ENCODE measurements at regions of chr1 and their contacts with region 1.

Region 1: DNA sequence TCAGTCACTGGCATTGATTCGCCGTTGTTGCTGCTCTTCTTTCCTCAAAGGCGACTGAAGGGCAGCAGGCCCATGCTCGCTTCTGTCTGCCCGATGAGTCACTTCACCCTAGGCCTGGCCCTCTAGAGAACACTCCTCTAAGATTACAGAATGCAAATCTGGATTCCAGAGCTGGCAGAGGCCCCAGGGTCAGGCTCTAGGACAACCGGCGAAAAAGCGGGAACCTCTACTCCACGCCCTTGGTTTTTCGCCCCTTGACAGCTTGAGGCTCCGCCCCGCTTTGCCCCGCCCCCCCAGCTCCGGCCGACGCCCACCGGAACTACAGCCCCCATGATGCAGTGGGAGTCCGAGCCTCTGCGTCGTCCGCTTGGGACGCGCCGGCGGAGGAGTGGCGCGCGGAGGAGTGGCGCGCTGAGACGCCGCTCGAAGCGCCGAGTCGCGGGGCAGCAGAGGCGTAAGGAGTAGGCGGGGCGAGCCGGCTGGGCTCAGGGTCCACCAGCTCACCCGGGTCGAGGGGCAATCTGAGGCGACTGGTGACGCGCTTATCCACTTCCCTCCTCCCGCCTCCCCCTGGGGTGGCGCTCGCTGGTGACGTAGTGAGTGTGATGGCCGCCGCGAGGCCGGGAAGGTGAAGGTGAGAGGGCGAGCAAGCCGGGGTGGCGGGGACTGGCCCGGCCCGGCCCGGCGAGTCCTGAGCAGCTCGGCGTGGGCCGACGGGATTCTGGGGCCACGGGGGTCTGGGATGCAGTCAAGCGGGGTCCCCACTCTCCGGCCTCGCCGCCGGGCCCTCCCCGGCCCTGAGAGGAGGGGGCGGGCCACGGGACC is at the start of gene MFN2:
- DNase-seq: peak; percentile 98
- H3K4me3 ChIP-seq: peak within 1 kb of the TSS; percentile 67 to 95 (median 89)
- H3K27ac ChIP-seq: peak within 1 kb of the TSS; percentile 91
- H3K4me1 ChIP-seq: peaks cover 35% of the 10 kb centered on the region
- H3K27me3 ChIP-seq: no peaks in the 10 kb centered on the region
- CTCF ChIP-seq: no peak
- total RNA-seq, gene MFN2: 106 to 133 TPM

Region 2: DNA sequence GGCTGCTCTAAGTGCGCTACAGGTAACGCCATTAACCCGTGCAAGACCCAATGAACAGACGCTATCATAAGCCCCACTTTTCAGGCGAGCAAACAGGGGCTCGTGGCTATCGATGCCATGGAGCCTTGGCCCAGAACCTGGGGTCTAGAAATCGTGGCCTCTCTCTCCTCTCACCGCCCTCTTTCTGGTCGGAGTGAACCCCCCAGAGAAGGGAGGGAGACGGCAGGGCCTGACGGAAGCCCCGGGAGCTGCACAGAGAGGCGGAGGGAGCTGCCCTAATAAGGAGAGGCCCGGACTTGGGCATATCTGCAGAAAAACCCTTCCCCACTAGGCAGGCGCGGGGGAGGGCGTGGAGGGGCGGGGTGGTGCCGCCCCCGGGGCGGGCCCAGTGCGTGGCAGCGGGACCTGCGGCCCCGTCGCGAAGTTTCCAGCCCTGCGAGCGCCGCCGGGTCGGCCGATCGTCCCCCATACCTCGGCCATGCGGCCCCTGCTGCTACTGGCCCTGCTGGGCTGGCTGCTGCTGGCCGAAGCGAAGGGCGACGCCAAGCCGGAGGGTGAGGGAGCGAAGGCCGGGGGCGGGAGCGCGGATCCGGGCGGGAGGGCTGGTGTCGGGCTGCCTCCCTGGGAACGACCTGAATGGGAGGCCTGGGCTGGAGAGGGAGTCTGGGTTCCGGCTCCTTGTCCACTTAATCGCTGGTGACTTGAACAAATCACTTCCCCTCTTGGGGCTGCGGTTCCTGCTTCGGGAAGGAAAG is 45.6 kb before region 1 on chr1 and contains the start of gene PLOD1:
- CTCF ChIA-PET with region 1: no interaction called
- dilution Hi-C with region 1: loop called (anchors 5 kb)
- in situ Hi-C with region 1: no loop called
- intact Hi-C with region 1: loop called (anchors 5 kb)
- DNase-seq: peak; percentile 82
- H3K4me3 ChIP-seq: peak within 1 kb of the TSS; percentile 74 to 85 (median 75)
- H3K27ac ChIP-seq: peak within 1 kb of the TSS; percentile 4
- H3K4me1 ChIP-seq: peaks cover 29% of the 10 kb centered on the region
- H3K27me3 ChIP-seq: no peaks in the 10 kb centered on the region
- CTCF ChIP-seq: no peak
- total RNA-seq, gene PLOD1: 107 to 197 TPM

Region 3: DNA sequence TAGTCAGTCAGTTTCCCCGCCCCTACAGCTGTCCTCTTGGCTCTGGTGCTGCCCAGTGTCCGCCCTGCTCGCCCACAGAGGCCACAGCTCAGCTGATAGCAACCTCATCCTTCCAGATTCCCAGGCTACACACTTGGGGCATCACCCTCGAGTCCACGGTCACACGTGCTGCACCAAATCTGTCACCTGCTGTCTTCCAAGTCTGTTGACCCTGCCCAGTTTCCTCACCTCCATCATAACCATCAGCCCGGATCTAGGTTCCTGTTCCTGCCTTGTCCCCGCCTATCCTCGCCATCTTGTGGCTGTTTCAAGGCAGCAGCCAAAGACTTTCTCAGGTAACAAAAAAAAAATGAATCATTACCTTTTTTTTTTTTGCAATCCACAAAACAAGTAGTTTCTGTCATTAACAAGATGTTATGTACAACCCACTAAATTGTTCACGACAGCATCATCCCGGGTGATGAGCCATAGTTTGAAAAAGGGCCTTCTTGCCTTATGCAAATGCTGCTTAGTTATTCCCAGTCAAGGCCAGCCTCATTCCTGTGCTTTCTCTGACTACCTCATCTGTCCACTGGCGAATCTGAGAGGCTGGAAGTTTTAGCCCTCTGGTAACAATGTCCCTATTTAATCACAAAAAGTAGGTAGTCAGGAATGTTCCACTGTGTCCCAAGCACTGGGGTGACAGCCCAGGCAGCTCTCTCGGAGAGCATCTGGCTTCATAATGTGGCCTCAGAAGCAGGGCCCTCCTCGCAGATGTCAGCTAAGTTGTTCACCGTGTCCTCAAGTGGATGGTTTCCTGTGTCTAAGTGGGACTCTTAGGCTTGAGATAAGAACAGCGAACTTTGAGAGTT is 34.3 kb after region 1 on chr1:
- CTCF ChIA-PET with region 1: interaction called, 5 read pairs
- dilution Hi-C with region 1: no loop called
- in situ Hi-C with region 1: no loop called
- intact Hi-C with region 1: loop called (anchors 2 kb)
- DNase-seq: peak; percentile 83
- H3K4me3 ChIP-seq: no peak overlapping the region
- H3K27ac ChIP-seq: peak overlapping the region; percentile 56
- H3K4me1 ChIP-seq: peaks cover 11% of the 10 kb centered on the region
- H3K27me3 ChIP-seq: no peaks in the 10 kb centered on the region
- CTCF ChIP-seq: peak in 1 of 2 donors; percentile 40

Region 4: DNA sequence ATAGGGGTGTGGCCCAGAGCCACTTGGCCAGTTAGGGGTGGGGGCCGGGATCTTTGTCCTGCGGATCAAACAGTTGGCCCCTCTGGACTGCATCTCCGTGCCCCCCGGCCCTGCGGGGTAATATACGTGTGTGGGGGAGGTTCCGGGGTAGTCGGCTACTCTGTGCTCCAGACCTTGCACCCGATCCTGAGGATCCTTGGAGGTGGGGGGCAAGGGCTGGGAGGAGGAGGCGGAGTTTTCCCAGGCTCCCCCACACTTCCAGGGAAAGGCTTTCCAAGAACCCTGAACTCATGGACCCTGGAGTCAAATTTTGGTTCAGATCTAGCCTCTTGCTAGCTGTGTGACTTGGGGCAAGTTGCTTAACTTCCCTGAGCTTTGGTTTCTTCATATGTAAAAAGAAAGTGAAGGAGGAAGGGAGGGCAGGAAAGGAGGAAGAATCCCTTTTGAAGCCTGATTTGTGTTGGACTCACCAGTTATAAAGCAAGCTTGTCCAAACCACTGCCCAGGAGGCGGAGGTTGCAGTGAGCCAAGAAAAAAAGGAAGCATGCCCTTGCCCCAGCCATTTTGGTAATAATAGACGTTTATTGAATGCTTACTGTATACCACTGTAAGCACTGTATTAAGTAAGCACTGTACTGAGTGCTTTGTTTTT is 39.9 kb after region 1 on chr1:
- CTCF ChIA-PET with region 1: no interaction called
- dilution Hi-C with region 1: loop called (anchors 5 kb)
- in situ Hi-C with region 1: no loop called
- intact Hi-C with region 1: loop called (anchors 2 kb)
- DNase-seq: peak; percentile 21
- H3K4me3 ChIP-seq: peak overlapping the region; percentile 74 to 92 (median 83)
- H3K27ac ChIP-seq: peak overlapping the region; percentile 69
- H3K4me1 ChIP-seq: peaks cover 2% of the 10 kb centered on the region
- H3K27me3 ChIP-seq: no peaks in the 10 kb centered on the region
- CTCF ChIP-seq: no peak

Region 5: DNA sequence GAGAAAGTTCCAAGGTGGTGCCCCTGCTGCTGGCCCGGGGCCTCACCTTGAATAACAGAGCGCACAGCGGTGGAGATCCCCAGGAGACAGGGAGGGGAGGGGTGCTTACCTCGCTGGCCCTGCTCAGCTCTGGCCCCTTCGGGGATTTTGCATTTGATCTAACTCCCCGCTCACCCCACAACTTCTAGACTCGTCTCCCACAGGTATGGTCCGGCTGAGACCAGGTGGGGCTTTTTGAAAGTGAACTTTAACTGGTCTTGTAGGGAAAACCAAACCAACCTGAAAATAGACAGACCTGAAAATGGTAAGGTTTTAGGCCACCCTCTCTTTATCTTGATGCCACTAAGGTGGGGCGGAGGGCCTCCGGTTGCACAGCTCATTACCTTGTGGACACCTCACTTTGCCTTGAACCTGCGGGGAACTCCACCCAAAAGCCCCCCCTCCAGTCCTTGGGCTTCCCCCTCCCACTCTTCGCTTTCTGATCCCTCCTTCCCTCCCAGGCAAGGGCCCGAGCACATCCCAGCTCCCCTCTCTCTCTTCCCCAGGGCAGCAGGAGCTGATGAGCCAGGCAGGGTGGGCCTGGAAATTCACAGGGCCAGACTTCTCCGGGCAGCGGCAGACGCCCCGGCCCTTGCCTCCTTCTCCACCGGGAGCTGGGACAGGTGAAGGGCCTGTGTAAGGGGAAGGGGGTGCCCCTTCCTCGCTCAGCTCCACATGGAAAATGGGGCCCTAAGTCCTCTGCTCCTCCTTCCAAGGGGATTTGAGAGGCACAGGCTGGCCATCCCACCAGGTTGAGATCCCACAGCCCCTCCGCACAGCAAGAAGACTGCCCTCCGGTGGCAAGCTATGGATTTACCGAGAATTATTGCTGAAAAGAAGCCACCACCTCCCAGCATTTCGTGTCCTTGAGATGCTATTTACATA is 99.1 kb after region 1 on chr1:
- CTCF ChIA-PET with region 1: no interaction called
- dilution Hi-C with region 1: loop called (anchors 5 kb)
- in situ Hi-C with region 1: no loop called
- intact Hi-C with region 1: no loop called
- DNase-seq: no peak
- H3K4me3 ChIP-seq: no peak overlapping the region
- H3K27ac ChIP-seq: no peak overlapping the region
- H3K4me1 ChIP-seq: no peaks in the 10 kb centered on the region
- H3K27me3 ChIP-seq: no peaks in the 10 kb centered on the region
- CTCF ChIP-seq: peak; percentile 51 to 61